Caco-2 (cell line): ENCODE measurements at regions of chr18 and their contacts with region 1.

Region 1: GRCh38 chr18:58287353-58288274 is 243.6 kb downstream of the NEDD4L start:
- DNase-seq: no peak
- H3K4me3 ChIP-seq: no peak overlapping the region
- H3K4me3 Mint-ChIP-seq: peak overlapping the region; percentile 62
- H3K27ac Mint-ChIP-seq: peak overlapping the region; percentile 67
- H3K4me1 ChIP-seq: peaks cover 35% of the 10 kb centered on the region
- H3K4me1 Mint-ChIP-seq: peaks cover 20% of the 10 kb centered on the region
- H3K27me3 ChIP-seq: no peaks in the 10 kb centered on the region
- H3K27me3 Mint-ChIP-seq: no peaks in the 10 kb centered on the region
- CTCF ChIP-seq: no peak

Region 2: DNA sequence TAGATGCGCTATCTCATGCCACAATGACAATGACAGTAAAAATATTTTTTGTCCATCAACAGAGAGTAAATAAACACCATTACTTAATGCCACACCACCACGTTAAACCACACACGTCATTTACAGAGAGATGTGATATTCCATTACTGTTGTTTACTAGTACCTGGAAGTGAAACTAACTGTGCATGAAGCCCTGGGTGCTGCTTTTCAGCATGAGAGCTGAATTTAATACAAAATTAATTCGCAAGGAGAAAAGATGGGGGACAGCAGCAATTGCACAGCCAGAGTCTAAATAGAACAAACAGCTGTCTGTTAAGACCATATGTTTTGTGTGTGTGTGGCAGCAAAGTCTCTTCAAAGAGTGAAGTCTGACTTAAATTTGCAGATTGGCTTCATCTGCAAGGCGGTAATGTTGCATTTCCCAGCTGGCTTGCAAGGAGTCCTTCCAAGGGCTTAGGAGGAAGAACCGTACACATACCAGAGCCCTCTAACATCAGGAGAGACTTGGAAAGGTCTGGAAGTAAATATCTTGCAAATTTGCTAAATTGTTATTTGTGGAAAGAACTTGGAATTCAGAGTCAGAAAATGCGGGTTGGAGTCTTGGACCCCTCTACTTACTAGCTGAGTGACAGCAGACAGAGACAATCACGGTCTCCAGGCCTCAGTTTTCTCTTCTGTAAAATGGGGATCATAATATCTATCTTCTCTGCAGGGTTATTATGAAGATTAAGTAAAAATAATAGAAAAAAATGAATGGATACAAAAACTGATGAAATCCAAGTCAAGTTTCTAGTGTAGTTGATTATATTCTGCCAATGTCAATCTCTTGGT is 213.7 kb after region 1 on chr18:
- CTCF ChIA-PET with region 1: interaction called, 13 read pairs
- POLR2A ChIA-PET with region 1: no interaction called
- intact Hi-C with region 1: no loop called
- DNase-seq: no peak
- H3K4me3 ChIP-seq: no peak overlapping the region
- H3K4me3 Mint-ChIP-seq: no peak overlapping the region
- H3K27ac Mint-ChIP-seq: no peak overlapping the region
- H3K4me1 ChIP-seq: no peaks in the 10 kb centered on the region
- H3K4me1 Mint-ChIP-seq: no peaks in the 10 kb centered on the region
- H3K27me3 ChIP-seq: no peaks in the 10 kb centered on the region
- H3K27me3 Mint-ChIP-seq: no peaks in the 10 kb centered on the region
- CTCF ChIP-seq: no peak